AG04450 (cell line): ENCODE measurements at regions of chr15 and their contacts with region 1.

Region 1: DNA sequence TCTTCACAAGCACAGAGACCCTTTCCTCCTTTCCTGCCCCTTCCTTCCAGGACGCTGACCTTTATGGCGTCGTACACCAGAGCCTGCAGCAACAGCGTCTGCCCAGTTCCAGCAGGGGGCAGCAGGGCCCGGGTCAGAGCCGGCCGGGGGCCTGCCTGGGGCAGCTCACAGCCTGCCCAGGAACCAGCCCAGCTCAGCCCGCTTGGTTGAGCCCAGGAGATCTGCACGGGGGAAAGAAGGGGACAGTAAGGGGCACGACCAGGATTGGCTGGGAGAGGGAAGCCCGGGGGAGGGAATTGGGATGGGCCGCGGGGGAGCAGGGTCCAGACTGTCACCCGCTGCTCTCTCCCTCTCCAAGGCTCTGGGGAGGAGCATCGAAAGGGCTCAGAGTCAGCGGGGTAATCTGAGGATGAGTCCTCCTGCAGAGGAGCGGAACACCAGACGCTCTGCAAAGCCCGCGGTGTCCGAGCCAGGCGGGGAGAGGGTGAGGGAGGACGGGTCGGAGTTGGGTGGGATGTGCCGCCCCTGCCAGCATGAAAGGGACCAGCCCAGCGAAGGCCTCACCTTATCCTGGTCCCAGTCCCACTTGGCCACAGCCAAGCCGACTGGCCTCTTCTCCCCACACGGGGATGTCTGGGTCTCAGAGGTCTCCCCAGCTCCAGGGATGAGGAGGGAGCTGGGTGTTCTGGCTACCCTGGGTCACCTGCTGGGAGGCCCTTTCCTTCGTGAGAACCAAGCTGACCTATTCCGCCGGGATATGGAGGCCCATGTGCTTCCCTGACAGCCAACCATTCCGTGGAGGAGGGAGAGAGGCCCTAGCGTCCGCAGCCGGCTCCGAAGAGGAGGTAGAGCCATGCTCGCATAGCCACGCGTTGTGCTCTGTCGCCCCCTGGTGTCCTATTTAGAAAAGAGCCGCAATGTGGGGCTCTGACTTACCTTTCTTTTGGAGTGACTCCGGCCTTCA is 7.4 kb upstream of the IGDCC3 start:
- DNase-seq: peak; percentile 43
- H3K4me3 ChIP-seq: no peak overlapping the region
- H3K27ac ChIP-seq: no peak overlapping the region
- H3K27me3 ChIP-seq: peaks cover 22% of the 10 kb centered on the region
- CTCF ChIP-seq: peak; percentile 86

Region 2: GRCh38 chr15:65264863-65265430 is 120.2 kb before region 1 on chr15:
- CTCF ChIA-PET with region 1: no interaction called
- POLR2A ChIA-PET with region 1: no interaction called
- DNase-seq: no peak
- H3K4me3 ChIP-seq: no peak overlapping the region
- H3K27ac ChIP-seq: no peak overlapping the region
- H3K27me3 ChIP-seq: no peaks in the 10 kb centered on the region
- CTCF ChIP-seq: no peak

Region 3: GRCh38 chr15:65312400-65312916 is 72.7 kb before region 1 on chr15:
- CTCF ChIA-PET with region 1: interaction called, 211 read pairs
- POLR2A ChIA-PET with region 1: no interaction called
- DNase-seq: no peak
- H3K4me3 ChIP-seq: no peak overlapping the region
- H3K27ac ChIP-seq: no peak overlapping the region
- H3K27me3 ChIP-seq: peaks cover 7% of the 10 kb centered on the region
- CTCF ChIP-seq: no peak

Region 4: GRCh38 chr15:65318870-65319356 is 66.3 kb before region 1 on chr15:
- CTCF ChIA-PET with region 1: interaction called, 211 read pairs
- POLR2A ChIA-PET with region 1: interaction called, 3 read pairs
- DNase-seq: no peak
- H3K4me3 ChIP-seq: no peak overlapping the region
- H3K27ac ChIP-seq: no peak overlapping the region
- H3K27me3 ChIP-seq: peaks cover 9% of the 10 kb centered on the region
- CTCF ChIP-seq: peak; percentile 86

Region 5: DNA sequence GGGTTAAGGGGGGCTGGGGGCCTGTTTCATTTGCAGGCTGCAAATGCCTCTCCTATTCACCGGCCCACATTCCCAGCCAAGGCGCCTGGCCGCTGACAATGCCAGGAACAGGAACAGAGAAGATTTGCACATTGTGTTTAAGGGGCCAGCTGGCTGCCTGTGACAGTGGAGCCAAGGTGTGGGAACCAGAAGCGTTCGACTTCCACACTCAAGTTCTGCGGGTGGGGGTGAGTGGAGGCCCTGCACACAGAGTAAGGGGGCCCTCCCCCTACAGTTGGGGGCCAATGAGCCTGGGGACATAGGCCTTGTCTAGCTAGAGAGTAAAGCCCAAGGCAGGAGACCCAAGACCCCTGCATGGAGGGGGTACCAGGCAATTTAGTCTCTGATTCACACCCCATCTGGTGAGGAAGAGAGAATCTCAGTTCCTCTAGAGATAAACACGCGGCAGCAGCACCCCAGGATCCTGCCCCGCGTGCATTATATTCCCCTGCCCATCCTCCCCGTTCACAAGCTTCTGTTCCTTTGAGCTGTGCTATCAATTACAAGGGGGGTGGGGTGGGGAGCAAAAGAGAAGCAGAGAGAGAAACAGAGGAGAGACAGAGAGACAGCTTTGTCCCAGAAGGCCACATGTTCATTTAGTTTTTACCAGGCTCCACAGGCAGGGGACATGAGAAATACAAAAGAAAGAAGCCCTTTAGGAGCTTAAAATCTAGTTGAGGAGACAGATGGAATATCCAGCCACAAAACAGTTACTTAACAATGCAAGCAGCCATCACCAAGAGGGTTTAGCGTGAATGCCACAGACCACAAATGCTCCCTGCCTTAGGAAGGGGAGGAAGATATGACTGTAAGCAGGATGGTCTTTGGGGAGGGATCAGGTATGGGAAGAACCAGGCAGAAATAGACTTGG is 16.6 kb before region 1 on chr15:
- CTCF ChIA-PET with region 1: interaction called, 12 read pairs
- POLR2A ChIA-PET with region 1: no interaction called
- DNase-seq: no peak
- H3K4me3 ChIP-seq: no peak overlapping the region
- H3K27ac ChIP-seq: no peak overlapping the region
- H3K27me3 ChIP-seq: peaks cover 35% of the 10 kb centered on the region
- CTCF ChIP-seq: no peak

Region 6: GRCh38 chr15:65494071-65494470 is 108.9 kb after region 1 on chr15:
- CTCF ChIA-PET with region 1: no interaction called
- POLR2A ChIA-PET with region 1: no interaction called
- DNase-seq: no peak
- H3K4me3 ChIP-seq: no peak overlapping the region
- H3K27ac ChIP-seq: no peak overlapping the region
- H3K27me3 ChIP-seq: no peaks in the 10 kb centered on the region
- CTCF ChIP-seq: no peak

Region 7: DNA sequence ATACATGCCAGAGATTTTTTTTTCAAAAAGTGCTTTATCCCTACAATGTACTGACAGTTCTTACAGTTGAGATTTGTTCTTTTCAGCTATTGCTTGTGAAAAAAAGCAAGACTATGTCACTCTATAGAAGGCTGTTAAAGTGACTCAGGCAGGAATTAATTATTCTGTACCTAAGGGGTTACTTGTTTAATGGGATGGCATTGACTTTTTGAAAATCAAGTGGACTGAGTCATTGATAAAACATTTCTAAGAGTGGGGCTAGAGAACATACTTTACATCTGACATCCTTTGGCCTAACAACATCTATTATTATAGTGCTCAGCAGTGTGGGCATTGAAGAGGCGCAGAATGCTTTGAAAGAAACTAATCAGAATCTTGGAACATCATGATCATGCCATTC is 191.5 kb after region 1 on chr15:
- CTCF ChIA-PET with region 1: no interaction called
- POLR2A ChIA-PET with region 1: no interaction called
- DNase-seq: peak; percentile 4
- H3K4me3 ChIP-seq: no peak overlapping the region
- H3K27ac ChIP-seq: no peak overlapping the region
- H3K27me3 ChIP-seq: no peaks in the 10 kb centered on the region
- CTCF ChIP-seq: no peak